MCF 10A (cell line): ENCODE measurements at regions of chr11 and their contacts with region 1.

Region 1: DNA sequence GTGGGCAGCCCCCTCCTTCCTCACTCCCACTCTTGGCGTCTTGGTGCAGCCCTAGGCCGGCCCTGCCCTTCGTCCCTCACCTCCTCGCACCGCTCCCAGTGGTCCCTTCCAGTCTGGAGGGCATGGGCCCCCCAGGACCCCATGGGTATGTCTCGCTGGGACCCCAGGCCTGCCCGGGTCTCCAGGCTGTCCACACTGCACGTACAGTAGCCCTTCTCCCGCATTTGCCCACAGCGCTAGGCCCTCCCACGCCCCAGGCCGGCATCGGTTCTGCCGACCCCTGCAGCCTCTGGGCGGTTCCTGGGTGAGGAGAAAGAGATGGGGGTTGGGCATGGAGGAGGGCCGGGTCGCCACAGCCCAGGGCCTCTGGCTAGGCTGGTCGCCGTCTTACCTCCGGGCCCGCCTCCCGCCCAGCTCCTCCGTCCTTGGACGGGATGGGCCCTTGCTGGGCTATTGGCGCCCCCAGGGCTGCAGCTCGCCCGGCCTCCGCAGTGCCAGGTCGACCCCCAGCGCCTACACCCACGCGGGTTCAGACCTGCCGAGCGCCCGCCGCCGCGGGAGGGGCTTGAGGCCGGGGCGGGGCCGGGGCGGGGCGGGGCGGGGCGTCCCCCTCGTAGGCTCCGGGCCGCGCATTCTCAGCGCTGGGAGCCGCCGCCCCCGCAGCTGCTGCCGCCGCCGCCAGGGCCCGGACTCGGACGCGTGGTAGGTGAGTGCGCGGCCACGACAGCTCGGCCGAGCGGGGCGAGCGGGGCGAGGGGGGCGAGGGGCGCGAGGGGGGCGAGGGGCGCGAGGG is at the start of gene CD151:
- DNase-seq: peak; percentile 68
- H3K4me3 Mint-ChIP-seq: peak within 1 kb of the TSS; percentile 81
- H3K27ac Mint-ChIP-seq: peak within 1 kb of the TSS; percentile 94
- H3K4me1 Mint-ChIP-seq: peaks cover 17% of the 10 kb centered on the region
- H3K27me3 Mint-ChIP-seq: no peaks in the 10 kb centered on the region
- CTCF ChIP-seq: no peak
- total RNA-seq, gene CD151: 404 and 412 TPM in 2 replicates

Region 2: GRCh38 chr11:783581-784015 is 48.9 kb before region 1 on chr11:
- CTCF ChIA-PET with region 1: no interaction called
- POLR2A ChIA-PET with region 1: no interaction called
- intact Hi-C with region 1: no loop called
- DNase-seq: peak; percentile 80
- H3K4me3 Mint-ChIP-seq: no peak overlapping the region
- H3K27ac Mint-ChIP-seq: no peak overlapping the region
- H3K4me1 Mint-ChIP-seq: no peaks in the 10 kb centered on the region
- H3K27me3 Mint-ChIP-seq: no peaks in the 10 kb centered on the region
- CTCF ChIP-seq: peak; percentile 64

Region 3: DNA sequence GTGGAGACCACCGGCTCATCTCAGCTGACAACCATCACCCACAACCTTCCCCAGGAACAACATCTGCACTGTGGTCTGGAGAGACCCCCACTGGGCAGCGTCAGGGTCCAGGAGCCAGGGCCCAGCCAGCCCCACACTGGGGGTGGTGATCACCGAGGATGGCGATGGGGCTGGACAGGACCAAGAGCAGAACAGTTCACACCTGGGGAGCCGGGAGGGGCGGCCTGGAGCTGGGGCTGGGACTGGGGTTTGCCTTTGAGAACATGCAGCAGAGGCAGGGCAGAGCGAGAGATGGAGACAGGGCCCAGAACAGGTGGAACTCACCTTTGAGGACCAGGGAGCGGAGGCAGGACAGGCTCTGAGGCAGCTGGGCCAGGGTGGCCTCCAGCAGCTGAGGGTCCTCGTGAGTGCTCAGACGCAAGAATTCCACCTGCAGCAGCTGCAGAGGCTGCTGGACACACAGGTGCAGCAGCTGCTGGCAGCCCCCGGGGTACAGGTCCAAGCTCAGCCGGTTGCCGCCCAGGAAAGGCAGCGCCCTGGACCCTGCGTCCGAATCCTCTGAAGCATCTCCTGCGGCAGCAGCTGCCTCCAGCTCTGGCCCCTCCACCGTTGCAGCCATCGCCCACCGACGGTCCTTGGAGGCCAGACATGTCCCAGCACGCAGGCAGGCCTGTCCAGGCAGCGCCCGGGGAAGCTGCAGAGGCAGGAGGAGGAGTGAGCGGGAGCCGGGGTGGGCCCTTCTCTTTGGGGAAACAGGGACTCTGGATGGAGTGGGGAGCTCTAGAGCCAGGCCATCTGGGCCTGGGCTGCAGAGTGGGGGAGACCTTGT is 28.5 kb before region 1 on chr11:
- CTCF ChIA-PET with region 1: no interaction called
- POLR2A ChIA-PET with region 1: interaction called, 40 read pairs
- intact Hi-C with region 1: no loop called
- DNase-seq: peak; percentile 63
- H3K4me3 Mint-ChIP-seq: peak overlapping the region; percentile 75
- H3K27ac Mint-ChIP-seq: no peak overlapping the region
- H3K4me1 Mint-ChIP-seq: peaks cover 6% of the 10 kb centered on the region
- H3K27me3 Mint-ChIP-seq: no peaks in the 10 kb centered on the region
- CTCF ChIP-seq: no peak

Region 4: DNA sequence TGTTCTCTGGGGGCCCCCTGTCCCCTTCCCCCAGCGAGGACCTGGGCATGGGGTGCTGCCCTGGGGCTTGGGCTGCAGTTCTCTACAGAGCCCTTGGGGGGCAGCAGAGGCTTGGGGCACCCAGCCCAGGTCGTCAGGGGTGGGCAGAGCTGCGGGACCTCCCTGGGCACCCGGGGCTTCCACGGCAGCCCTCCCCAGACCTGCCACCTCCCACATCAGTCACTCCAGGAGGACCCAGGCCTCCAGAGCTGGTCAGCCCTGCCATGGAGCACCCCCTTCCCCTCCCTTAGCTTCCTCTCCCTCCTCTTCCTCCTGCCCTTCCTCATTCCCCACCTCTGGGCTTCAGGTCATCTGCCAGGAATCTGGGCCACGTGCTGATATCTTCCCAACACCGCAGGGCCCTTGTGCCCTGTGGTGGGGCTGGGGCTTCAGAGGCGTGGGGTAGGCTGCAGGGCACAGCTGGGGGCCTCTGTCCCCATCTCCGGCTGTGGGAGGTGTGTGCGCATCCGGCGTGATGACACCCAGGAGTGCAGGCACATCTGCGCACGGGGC is 15.9 kb after region 1 on chr11:
- CTCF ChIA-PET with region 1: interaction called, 4 read pairs
- POLR2A ChIA-PET with region 1: interaction called, 119 read pairs
- intact Hi-C with region 1: no loop called
- DNase-seq: peak; percentile 40
- H3K4me3 Mint-ChIP-seq: no peak overlapping the region
- H3K27ac Mint-ChIP-seq: no peak overlapping the region
- H3K4me1 Mint-ChIP-seq: peaks cover 15% of the 10 kb centered on the region
- H3K27me3 Mint-ChIP-seq: no peaks in the 10 kb centered on the region
- CTCF ChIP-seq: peak; percentile 87

Region 5: DNA sequence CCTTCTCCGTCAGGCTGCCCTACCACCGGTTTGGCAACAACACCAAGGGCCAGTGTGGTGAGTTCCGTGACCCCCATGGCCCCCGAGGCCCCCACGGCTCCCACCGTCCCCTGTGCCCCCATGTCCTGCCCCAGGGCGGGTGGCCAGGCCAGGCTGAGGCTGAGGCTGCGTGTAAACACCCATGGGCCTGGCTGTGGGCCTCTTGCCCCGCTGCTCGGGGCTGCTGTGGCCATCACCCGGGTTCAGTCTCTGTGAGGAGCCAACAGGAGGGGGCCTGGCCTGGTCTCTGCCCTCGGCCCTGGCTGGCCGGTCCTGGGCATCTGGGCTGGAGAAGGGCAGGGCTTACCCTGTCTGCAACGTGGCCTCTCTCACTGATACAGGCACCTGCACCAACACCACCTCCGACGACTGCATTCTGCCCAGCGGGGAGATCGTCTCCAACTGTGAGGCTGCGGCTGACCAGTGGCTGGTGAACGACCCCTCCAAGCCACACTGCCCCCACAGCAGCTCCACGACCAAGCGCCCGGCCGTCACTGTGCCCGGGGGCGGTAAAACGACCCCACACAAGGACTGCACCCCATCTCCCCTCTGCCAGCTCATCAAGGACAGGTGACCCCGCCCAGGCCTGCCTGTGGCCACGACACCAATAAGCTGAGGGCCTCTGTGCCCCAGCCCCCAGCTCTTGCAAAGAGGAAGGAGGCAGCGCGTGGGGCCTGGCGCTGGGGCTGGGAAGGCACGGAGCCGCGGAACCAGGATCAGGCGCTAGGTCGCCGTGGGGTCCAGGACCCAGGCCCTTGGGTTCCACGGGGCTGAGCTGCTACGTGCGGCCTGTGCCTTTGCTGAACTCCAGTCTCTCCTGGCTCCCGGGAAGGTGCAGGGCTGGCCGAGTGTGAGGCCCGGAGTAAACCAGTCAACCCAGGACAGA is 271.1 kb after region 1 on chr11:
- CTCF ChIA-PET with region 1: no interaction called
- POLR2A ChIA-PET with region 1: no interaction called
- intact Hi-C with region 1: no loop called
- DNase-seq: no peak
- H3K4me3 Mint-ChIP-seq: no peak overlapping the region
- H3K27ac Mint-ChIP-seq: no peak overlapping the region
- H3K4me1 Mint-ChIP-seq: no peaks in the 10 kb centered on the region
- H3K27me3 Mint-ChIP-seq: no peaks in the 10 kb centered on the region
- CTCF ChIP-seq: no peak